ENCODE measurements at regions of chrX and their contacts with region 1.

Region 1: DNA sequence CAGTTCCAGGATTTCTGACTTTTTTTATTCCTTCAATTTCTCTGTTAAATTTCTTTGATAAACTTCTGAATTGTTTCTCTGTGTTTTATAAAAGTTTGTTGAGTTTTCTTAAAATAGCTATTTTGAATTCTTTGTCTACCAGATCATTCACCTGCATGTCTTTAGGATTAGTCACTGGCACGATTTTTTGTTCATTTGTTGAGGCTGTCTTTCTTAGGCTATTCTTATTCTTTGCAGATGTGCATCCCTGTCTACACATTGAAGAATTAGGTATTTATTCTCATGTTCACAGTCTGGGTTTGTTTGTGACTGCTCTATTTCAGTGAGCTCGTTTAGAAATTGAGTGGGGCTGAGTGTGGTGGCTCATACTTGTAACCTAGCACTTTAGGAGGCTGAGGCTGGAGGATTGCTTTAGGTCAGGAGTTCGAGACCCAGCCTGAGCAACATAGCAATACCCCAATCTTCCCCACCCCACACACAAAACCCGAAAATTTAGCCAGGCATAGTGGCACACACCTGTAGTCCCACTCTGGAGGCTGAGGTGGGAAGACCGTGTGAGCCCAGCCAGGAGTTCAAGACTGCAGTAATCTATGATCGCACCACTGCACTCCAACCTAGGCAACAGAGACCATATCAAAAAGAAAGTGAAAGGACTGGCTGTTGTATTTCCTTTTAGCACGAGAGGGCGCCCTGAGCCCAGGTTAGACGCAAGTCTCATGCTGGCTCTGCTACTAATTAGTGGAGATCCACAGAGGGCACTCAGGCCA is 42.0 kb downstream of the F8 start:
- DNase-seq: peak; percentile 67
- H3K4me3 Mint-ChIP-seq: peak overlapping the region; percentile 71
- H3K27ac Mint-ChIP-seq: peak overlapping the region; percentile 69
- H3K4me1 Mint-ChIP-seq: peaks cover 12% of the 10 kb centered on the region
- H3K27me3 Mint-ChIP-seq: no peaks in the 10 kb centered on the region

Region 2: GRCh38 chrX:154918060-154918483 is 62.4 kb before region 1 on chrX:
- intact Hi-C with region 1: loop called (anchors 5 kb)
- DNase-seq: peak; percentile 9
- H3K4me3 Mint-ChIP-seq: peak overlapping the region; percentile 19
- H3K27ac Mint-ChIP-seq: no peak overlapping the region
- H3K4me1 Mint-ChIP-seq: peaks cover 4% of the 10 kb centered on the region
- H3K27me3 Mint-ChIP-seq: peaks cover 9% of the 10 kb centered on the region

Region 3: GRCh38 chrX:155001873-155002272 is 21.4 kb after region 1 on chrX:
- intact Hi-C with region 1: no loop called
- DNase-seq: no peak
- H3K4me3 Mint-ChIP-seq: no peak overlapping the region
- H3K27ac Mint-ChIP-seq: no peak overlapping the region
- H3K4me1 Mint-ChIP-seq: peaks cover 2% of the 10 kb centered on the region
- H3K27me3 Mint-ChIP-seq: peaks cover 7% of the 10 kb centered on the region

Region 4: GRCh38 chrX:155056877-155057792 is 76.6 kb after region 1 on chrX:
- intact Hi-C with region 1: loop called (anchors 1 kb)
- DNase-seq: peak; percentile 32
- H3K4me3 Mint-ChIP-seq: peak overlapping the region; percentile 31
- H3K27ac Mint-ChIP-seq: peak overlapping the region; percentile 42
- H3K4me1 Mint-ChIP-seq: peaks cover 25% of the 10 kb centered on the region
- H3K27me3 Mint-ChIP-seq: no peaks in the 10 kb centered on the region

Region 5: GRCh38 chrX:155148724-155149537 is 168.4 kb after region 1 on chrX:
- intact Hi-C with region 1: loop called (anchors 2 kb)
- DNase-seq: peak; percentile 11
- H3K4me3 Mint-ChIP-seq: no peak overlapping the region
- H3K27ac Mint-ChIP-seq: no peak overlapping the region
- H3K4me1 Mint-ChIP-seq: peaks cover 5% of the 10 kb centered on the region
- H3K27me3 Mint-ChIP-seq: peaks cover 4% of the 10 kb centered on the region

Region 6: DNA sequence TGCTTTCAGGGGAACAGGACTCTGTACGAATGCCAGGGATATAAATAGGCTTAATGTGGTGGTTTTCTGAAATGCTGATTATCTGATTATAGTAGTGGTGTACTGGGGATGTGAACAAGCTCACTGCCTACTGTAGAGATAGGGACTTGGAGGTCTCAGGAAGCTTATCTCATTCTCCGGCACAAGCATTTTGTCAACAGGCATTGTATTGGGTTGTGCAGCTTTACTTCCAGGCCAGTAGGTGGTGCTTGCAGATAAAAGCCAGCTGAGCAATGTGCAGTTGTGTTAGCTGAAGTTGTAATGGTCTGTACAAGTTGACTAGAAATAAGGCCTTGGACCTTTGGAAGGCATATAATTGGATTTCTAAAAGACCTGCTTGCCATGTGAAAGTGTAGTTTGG is 681.8 kb after region 1 on chrX:
- intact Hi-C with region 1: no loop called
- DNase-seq: no peak
- H3K4me3 Mint-ChIP-seq: no peak overlapping the region
- H3K27ac Mint-ChIP-seq: no peak overlapping the region
- H3K4me1 Mint-ChIP-seq: peaks cover 2% of the 10 kb centered on the region
- H3K27me3 Mint-ChIP-seq: peaks cover 10% of the 10 kb centered on the region

Region 7: GRCh38 chrX:155819966-155820491 is 839.5 kb after region 1 on chrX:
- intact Hi-C with region 1: loop called (anchors 10 kb)
- DNase-seq: no peak
- H3K4me3 Mint-ChIP-seq: no peak overlapping the region
- H3K27ac Mint-ChIP-seq: no peak overlapping the region
- H3K4me1 Mint-ChIP-seq: peaks cover 2% of the 10 kb centered on the region
- H3K27me3 Mint-ChIP-seq: peaks cover 5% of the 10 kb centered on the region

Measured in activated T-helper 2 cell treated with anti-CD3 and anti-CD28 coated beads, Interferon-gamma antibody, Interleukin-2, Interleukin-4, amounts not matched to agents 10 μg/mL and 5 μg/mL and 100 μg/mL, durations not matched to agents 14 hours and 24 hours and 36 hours (primary cell).